ENCODE measurements at regions of chr15 and their contacts with region 1.

Region 1: DNA sequence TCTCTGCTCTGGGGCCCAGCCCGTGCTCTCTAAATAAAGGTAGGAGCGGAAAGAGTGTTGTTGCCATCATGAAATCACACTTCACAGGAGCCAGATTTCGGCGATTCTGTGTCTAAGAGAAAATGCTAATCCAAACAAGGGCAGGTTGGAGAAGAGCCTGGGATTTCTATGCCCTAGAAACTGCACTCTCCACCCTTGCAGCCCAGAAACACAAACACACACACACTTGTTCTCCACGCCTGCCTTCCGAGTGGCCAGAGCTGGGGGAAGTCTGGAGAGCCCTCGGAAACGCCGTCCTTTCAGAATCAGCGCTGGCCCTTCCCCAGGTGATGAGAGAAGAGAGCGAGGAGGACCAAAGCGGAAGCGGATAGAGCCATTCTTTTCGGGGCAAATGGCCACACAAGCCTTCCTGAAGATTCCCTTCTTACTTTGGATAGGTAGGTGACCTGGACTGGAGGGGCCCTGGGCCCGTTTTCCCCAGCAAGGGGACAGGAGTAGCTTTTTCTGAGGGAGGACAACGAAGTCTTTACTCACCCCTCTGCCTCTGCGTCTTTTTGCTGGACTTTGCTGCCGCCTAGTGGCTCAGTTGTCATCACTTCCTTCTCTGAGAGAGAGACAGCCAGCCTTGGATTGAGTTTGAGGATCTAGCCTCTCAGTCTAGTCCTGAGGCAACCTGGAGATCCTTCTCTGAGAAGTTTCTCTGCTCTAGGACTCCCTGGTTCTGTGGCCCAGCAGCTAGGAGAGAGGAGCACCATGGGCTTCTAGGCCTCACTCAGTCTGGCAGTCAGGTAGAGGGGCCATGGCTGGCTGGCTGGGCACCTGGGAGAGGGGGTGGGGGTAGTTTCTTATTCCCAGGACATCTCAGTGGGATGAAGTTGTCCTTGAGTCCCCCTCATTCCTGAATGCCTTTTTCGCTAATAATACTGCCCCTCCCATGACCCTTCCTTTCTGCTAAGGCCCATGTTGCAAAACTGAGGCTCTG is 37.7 kb downstream of the SENP8 start:
- DNase-seq: peak; percentile 83
- ATAC-seq: peak; percentile 86
- H3K4me3 ChIP-seq: peak overlapping the region; percentile 26 to 63 (median 28)
- H3K4me3 Mint-ChIP-seq: peak overlapping the region; percentile 87
- H3K27ac ChIP-seq: peak overlapping the region in 1 of 2 donors; percentile 43
- H3K27ac Mint-ChIP-seq: no peak overlapping the region
- H3K4me1 ChIP-seq: peaks cover 0 to 5% of the 10 kb centered on the region in 2 donors
- H3K4me1 Mint-ChIP-seq: peaks cover 9% of the 10 kb centered on the region
- H3K27me3 ChIP-seq: peaks cover 0 to 7% (median 0%) of the 10 kb centered on the region in 4 experiments
- H3K27me3 Mint-ChIP-seq: no peaks in the 10 kb centered on the region
- CTCF ChIP-seq: peak; percentile 93

Region 2: DNA sequence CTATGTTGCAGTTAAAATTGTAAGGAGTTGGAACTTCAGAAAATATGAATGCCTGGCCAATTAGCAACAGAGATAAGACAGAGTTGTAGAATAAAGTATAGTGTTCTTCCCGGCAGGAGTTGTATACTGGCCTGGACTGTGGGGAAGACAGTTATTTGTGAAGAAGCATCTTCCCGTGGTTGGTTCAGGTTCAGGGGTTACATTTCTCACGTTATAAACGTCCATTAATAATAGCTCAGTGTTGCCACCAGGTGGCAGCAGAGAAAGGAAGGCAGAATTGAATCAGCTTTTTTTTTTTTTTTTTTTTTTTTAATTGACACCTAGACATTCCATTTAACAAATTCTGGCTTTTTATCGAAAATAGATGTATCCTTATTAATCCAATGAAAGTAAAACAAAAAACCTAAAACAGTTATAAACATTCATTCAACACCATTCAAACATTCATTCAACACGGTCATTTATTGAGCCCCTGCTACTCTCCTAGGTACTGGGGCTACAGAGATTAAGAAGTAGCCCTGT is 412.0 kb before region 1 on chr15:
- CTCF ChIA-PET with region 1: interaction called, 87 read pairs
- POLR2A ChIA-PET with region 1: no interaction called
- intact Hi-C with region 1: no loop called
- DNase-seq: peak; percentile 62
- ATAC-seq: no peak
- H3K4me3 ChIP-seq: no peak overlapping the region
- H3K4me3 Mint-ChIP-seq: no peak overlapping the region
- H3K27ac ChIP-seq: no peak overlapping the region
- H3K27ac Mint-ChIP-seq: no peak overlapping the region
- H3K4me1 ChIP-seq: no peaks in the 10 kb centered on the region
- H3K4me1 Mint-ChIP-seq: no peaks in the 10 kb centered on the region
- H3K27me3 ChIP-seq: no peaks in the 10 kb centered on the region
- H3K27me3 Mint-ChIP-seq: peaks cover 20% of the 10 kb centered on the region
- CTCF ChIP-seq: peak; percentile 90

Region 3: GRCh38 chr15:71752604-71753289 is 403.2 kb before region 1 on chr15:
- CTCF ChIA-PET with region 1: interaction called, 15 read pairs
- POLR2A ChIA-PET with region 1: no interaction called
- intact Hi-C with region 1: no loop called
- DNase-seq: no peak
- ATAC-seq: no peak
- H3K4me3 ChIP-seq: no peak overlapping the region
- H3K4me3 Mint-ChIP-seq: no peak overlapping the region
- H3K27ac ChIP-seq: no peak overlapping the region
- H3K27ac Mint-ChIP-seq: no peak overlapping the region
- H3K4me1 ChIP-seq: no peaks in the 10 kb centered on the region
- H3K4me1 Mint-ChIP-seq: no peaks in the 10 kb centered on the region
- H3K27me3 ChIP-seq: peaks cover 0 to 8% (median 3%) of the 10 kb centered on the region in 4 experiments
- H3K27me3 Mint-ChIP-seq: peaks cover 20% of the 10 kb centered on the region
- CTCF ChIP-seq: no peak

Region 4: GRCh38 chr15:71780115-71780976 is 375.6 kb before region 1 on chr15:
- CTCF ChIA-PET with region 1: interaction called, 86 read pairs
- POLR2A ChIA-PET with region 1: no interaction called
- intact Hi-C with region 1: loop called (anchors 1 kb)
- DNase-seq: peak; percentile 59
- ATAC-seq: peak; percentile 51
- H3K4me3 ChIP-seq: no peak overlapping the region
- H3K4me3 Mint-ChIP-seq: no peak overlapping the region
- H3K27ac ChIP-seq: no peak overlapping the region
- H3K27ac Mint-ChIP-seq: no peak overlapping the region
- H3K4me1 ChIP-seq: no peaks in the 10 kb centered on the region
- H3K4me1 Mint-ChIP-seq: peaks cover 3% of the 10 kb centered on the region
- H3K27me3 ChIP-seq: no peaks in the 10 kb centered on the region
- H3K27me3 Mint-ChIP-seq: peaks cover 15% of the 10 kb centered on the region
- CTCF ChIP-seq: peak; percentile 93

Region 5: DNA sequence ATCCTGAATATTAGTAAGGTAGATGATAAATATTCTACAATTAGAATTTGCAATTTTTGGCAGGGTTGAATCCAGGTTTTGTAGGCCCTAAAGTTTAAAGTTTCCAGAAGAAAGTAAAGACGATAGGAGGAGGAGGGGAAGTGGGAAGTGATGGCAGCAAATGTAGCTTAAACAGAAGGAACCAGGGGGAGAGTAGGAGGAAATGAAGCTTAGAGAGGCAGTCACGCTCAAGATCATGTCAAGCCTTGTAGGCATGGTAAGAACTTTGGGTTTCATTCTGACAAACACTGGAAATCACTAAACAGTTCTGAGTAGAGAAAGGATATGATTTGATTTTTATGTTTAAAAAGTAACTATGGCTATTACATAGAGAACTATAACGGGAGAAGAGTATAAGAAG is 281.7 kb before region 1 on chr15:
- CTCF ChIA-PET with region 1: interaction called, 3 read pairs
- POLR2A ChIA-PET with region 1: no interaction called
- intact Hi-C with region 1: loop called (anchors 10 kb)
- DNase-seq: no peak
- ATAC-seq: no peak
- H3K4me3 ChIP-seq: no peak overlapping the region
- H3K4me3 Mint-ChIP-seq: no peak overlapping the region
- H3K27ac ChIP-seq: no peak overlapping the region
- H3K27ac Mint-ChIP-seq: no peak overlapping the region
- H3K4me1 ChIP-seq: no peaks in the 10 kb centered on the region
- H3K4me1 Mint-ChIP-seq: no peaks in the 10 kb centered on the region
- H3K27me3 ChIP-seq: no peaks in the 10 kb centered on the region
- H3K27me3 Mint-ChIP-seq: no peaks in the 10 kb centered on the region
- CTCF ChIP-seq: no peak

Region 6: DNA sequence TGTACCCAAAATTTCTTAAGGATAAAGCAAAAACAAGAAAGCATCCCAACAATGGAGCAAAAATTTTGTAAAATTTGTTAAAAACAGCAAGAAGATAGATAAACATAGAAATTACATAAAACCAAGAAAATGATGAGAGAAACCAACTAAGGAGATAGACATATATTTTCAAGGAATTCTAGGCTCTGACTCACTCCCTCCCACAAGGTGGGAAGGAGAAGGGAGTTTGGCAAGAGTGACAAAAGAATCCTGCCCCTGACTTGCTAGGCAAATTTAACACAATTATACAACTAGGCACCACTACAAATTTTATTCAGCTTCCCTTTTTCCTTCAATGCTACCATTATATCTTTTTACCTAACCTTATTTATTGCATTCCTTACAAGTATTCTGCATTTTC is 108.9 kb before region 1 on chr15:
- CTCF ChIA-PET with region 1: no interaction called
- POLR2A ChIA-PET with region 1: no interaction called
- intact Hi-C with region 1: loop called (anchors 10 kb)
- DNase-seq: no peak
- ATAC-seq: no peak
- H3K4me3 ChIP-seq: no peak overlapping the region
- H3K4me3 Mint-ChIP-seq: no peak overlapping the region
- H3K27ac ChIP-seq: no peak overlapping the region
- H3K27ac Mint-ChIP-seq: no peak overlapping the region
- H3K4me1 ChIP-seq: no peaks in the 10 kb centered on the region
- H3K4me1 Mint-ChIP-seq: peaks cover 12% of the 10 kb centered on the region
- H3K27me3 ChIP-seq: no peaks in the 10 kb centered on the region
- H3K27me3 Mint-ChIP-seq: no peaks in the 10 kb centered on the region
- CTCF ChIP-seq: no peak

Region 7: GRCh38 chr15:72141171-72142084 is 14.5 kb before region 1 on chr15:
- CTCF ChIA-PET with region 1: interaction called, 11 read pairs
- POLR2A ChIA-PET with region 1: no interaction called
- intact Hi-C with region 1: no loop called
- DNase-seq: peak; percentile 41
- ATAC-seq: peak; percentile 78
- H3K4me3 ChIP-seq: no peak overlapping the region
- H3K4me3 Mint-ChIP-seq: peak overlapping the region; percentile 14
- H3K27ac ChIP-seq: peak overlapping the region in 1 of 2 donors; percentile 76
- H3K27ac Mint-ChIP-seq: peak overlapping the region; percentile 75
- H3K4me1 ChIP-seq: peaks cover 6 to 11% of the 10 kb centered on the region in 2 donors
- H3K4me1 Mint-ChIP-seq: peaks cover 14% of the 10 kb centered on the region
- H3K27me3 ChIP-seq: no peaks in the 10 kb centered on the region
- H3K27me3 Mint-ChIP-seq: peaks cover 3% of the 10 kb centered on the region
- CTCF ChIP-seq: no peak